Gastrocnemius medialis (tissue), 4 donors: ENCODE measurements at regions of chr17 and their contacts with region 1.

Region 1: DNA sequence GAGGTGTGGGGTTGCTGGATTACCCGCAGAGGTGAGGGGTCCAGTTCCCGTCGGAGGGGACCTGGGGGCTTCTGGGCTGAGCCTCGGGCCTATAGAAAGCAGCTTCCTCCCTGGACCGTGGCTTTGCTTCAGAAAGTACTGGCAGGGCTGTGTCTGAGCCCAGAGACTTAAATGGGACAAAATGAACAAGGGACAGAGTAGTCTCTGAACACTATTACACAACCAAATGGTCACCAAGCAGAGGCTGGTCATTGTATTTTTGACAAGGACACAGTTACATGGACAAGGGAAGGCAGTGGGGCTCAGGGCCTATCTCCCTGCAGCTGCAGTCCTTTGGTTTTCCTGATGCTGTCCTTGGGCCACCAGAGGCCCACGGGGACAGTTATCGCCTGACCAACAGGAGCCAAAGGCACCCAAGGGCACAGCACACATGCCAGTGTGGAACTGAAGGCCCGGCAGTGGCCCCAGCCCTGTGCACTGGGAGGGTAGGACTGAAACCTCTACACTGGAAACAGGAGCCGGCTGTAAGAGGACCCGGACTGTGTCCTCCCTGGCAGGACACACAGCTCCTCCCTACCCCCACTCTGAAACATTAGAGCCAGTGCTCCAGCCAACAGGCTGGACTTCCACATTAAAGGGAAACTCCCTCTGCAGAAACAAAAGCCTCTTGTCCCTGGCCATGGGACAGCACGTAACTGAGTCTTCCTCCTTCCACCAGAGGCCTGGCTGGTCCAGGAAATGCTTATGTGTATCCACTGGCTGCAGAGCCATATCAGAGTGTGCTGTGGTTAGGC is 26.0 kb upstream of the ERN1 start:
- DNase-seq: peak; percentile 93 to 98
- ATAC-seq: peak; percentile 84 to 90
- H3K4me3 ChIP-seq: peak overlapping the region in 2 of 4 donors; percentile 5 to 24
- H3K27ac ChIP-seq: peak overlapping the region; percentile 98 to 99 (median 98)
- H3K4me1 ChIP-seq: peaks cover 92 to 96% of the 10 kb centered on the region in 2 donors
- H3K27me3 ChIP-seq: no peaks in the 10 kb centered on the region
- CTCF ChIP-seq: no peak
- POLR2A ChIP-seq: peak; percentile 41 to 52

Region 2: GRCh38 chr17:64174686-64175456 is 18.9 kb after region 1 on chr17:
- in situ Hi-C with region 1: no loop called
- intact Hi-C with region 1: loop called (anchors 1 kb)
- DNase-seq: peak; percentile 79 to 88
- ATAC-seq: peak; percentile 65 to 79
- H3K4me3 ChIP-seq: no peak overlapping the region
- H3K27ac ChIP-seq: peak overlapping the region; percentile 86 to 92 (median 89)
- H3K4me1 ChIP-seq: peaks cover 81 to 85% of the 10 kb centered on the region in 2 donors
- H3K27me3 ChIP-seq: no peaks in the 10 kb centered on the region
- CTCF ChIP-seq: no peak
- POLR2A ChIP-seq: peak; percentile 46 to 52

Region 3: GRCh38 chr17:64202675-64203344 is 46.9 kb after region 1 on chr17:
- in situ Hi-C with region 1: no loop called
- intact Hi-C with region 1: loop called (anchors 2 kb)
- DNase-seq: peak; percentile 54 to 80
- ATAC-seq: peak; percentile 84 to 91
- H3K4me3 ChIP-seq: no peak overlapping the region
- H3K27ac ChIP-seq: peak overlapping the region; percentile 75 to 83 (median 76)
- H3K4me1 ChIP-seq: peaks cover 71 to 72% of the 10 kb centered on the region in 2 donors
- H3K27me3 ChIP-seq: no peaks in the 10 kb centered on the region
- CTCF ChIP-seq: no peak
- POLR2A ChIP-seq: no peak

Region 4: DNA sequence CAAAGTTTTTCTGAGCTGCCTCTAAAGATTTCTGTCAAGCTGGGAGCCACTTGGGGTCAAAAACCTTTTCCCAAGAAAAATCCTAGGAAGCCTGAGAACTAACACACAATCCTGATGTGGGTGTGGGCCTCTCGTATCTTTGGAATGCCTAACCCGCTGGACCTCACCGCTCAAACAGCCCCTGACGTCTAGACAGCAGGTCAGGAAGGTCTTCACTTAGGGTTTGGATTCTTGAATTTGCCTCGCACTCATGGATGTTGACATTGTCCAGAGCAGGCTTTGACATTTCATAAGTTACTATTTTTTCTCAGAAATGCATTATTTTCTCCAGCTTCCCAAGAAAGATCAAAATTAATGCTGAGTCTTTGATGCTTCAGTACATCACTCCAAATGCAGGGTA is 88.2 kb after region 1 on chr17:
- in situ Hi-C with region 1: no loop called
- intact Hi-C with region 1: no loop called
- DNase-seq: no peak
- ATAC-seq: no peak
- H3K4me3 ChIP-seq: no peak overlapping the region
- H3K27ac ChIP-seq: peak overlapping the region in 1 of 4 donors; percentile 10
- H3K4me1 ChIP-seq: peaks cover 52 to 60% of the 10 kb centered on the region in 2 donors
- H3K27me3 ChIP-seq: no peaks in the 10 kb centered on the region
- CTCF ChIP-seq: no peak
- POLR2A ChIP-seq: no peak